Heart left ventricle (tissue), 16 donors: ENCODE measurements at regions of chr13 and their contacts with region 1.

Region 1: DNA sequence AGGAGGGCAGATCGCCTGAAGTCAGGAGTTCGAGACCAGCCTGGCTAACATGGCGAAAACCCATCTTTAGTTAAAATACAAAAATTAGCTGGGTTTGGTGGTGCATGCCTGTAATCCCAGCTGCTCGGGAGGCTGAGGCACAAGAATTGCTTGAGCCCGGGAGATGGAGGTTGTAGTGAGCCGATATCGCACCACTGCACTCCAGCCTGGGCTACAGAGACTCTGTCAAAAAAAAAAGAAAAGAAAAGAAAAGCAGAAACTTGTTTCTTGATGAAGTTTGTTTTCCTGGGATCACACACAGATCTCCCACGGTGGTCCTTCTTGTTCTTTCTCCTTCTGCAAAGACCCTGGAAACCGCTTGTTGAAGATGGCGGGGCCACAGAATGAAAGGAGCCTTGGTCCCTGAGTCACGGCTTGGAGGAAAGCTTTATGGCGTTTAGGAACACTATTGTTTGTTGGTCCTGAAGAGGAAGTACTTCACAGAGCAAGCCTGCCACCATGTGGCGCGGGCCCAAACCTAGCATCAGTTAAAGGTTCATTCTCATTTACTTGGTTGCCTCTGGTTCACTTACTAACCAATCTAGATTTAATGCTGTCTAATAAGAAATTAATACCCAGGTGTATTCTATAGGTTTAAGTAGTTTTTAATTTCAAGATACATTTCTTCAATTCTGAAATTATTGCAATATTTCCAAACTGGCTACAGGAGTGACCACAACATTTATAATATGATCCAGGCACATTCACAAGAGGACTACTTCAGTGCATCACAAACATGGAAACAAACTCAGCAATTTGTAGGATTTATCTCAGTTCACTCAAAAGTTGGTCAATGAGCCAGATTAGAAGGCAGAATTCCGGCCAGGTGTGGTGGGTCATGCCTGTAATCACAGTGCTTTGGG is 21.3 kb upstream of the ARL11 start:
- DNase-seq: peak; percentile 83 to 90 (median 88)
- ATAC-seq: peak; percentile 94 to 98 (median 98)
- H3K4me3 ChIP-seq: peak overlapping the region in 11 of 12 donors; percentile 13 to 52 (median 36)
- H3K27ac ChIP-seq: peak overlapping the region in 2 of 12 donors; percentile 28 to 50
- H3K4me1 ChIP-seq: peaks cover 0 to 7% (median 0%) of the 10 kb centered on the region in 12 donors
- H3K27me3 ChIP-seq: no peaks in the 10 kb centered on the region
- CTCF ChIP-seq: peak; percentile 66 to 93 (median 84)
- POLR2A ChIP-seq: no peak

Region 2: GRCh38 chr13:49300739-49301589 is 306.0 kb before region 1 on chr13:
- intact Hi-C with region 1: loop called (anchors 1 to 5 kb)
- DNase-seq: peak; percentile 40 to 65 (median 57)
- ATAC-seq: peak; percentile 54 to 77 (median 72)
- H3K4me3 ChIP-seq: peak overlapping the region in 9 of 12 donors; percentile 27 to 44 (median 33)
- H3K27ac ChIP-seq: peak overlapping the region in 3 of 12 donors; percentile 15 to 60 (median 24)
- H3K4me1 ChIP-seq: peaks cover 0 to 28% (median 13%) of the 10 kb centered on the region in 12 donors
- H3K27me3 ChIP-seq: no peaks in the 10 kb centered on the region
- CTCF ChIP-seq: peak; percentile 75 to 91 (median 86)
- POLR2A ChIP-seq: no peak

Region 3: GRCh38 chr13:49308089-49308875 is 298.7 kb before region 1 on chr13:
- intact Hi-C with region 1: loop called in 5 of 10 experiments (anchors 2 to 5 kb)
- DNase-seq: peak; percentile 74 to 91 (median 81)
- ATAC-seq: peak; percentile 91 to 93 (median 92)
- H3K4me3 ChIP-seq: no peak overlapping the region
- H3K27ac ChIP-seq: peak overlapping the region; percentile 45 to 92 (median 76)
- H3K4me1 ChIP-seq: peaks cover 3 to 33% (median 24%) of the 10 kb centered on the region in 12 donors
- H3K27me3 ChIP-seq: no peaks in the 10 kb centered on the region
- CTCF ChIP-seq: no peak
- POLR2A ChIP-seq: no peak

Region 4: DNA sequence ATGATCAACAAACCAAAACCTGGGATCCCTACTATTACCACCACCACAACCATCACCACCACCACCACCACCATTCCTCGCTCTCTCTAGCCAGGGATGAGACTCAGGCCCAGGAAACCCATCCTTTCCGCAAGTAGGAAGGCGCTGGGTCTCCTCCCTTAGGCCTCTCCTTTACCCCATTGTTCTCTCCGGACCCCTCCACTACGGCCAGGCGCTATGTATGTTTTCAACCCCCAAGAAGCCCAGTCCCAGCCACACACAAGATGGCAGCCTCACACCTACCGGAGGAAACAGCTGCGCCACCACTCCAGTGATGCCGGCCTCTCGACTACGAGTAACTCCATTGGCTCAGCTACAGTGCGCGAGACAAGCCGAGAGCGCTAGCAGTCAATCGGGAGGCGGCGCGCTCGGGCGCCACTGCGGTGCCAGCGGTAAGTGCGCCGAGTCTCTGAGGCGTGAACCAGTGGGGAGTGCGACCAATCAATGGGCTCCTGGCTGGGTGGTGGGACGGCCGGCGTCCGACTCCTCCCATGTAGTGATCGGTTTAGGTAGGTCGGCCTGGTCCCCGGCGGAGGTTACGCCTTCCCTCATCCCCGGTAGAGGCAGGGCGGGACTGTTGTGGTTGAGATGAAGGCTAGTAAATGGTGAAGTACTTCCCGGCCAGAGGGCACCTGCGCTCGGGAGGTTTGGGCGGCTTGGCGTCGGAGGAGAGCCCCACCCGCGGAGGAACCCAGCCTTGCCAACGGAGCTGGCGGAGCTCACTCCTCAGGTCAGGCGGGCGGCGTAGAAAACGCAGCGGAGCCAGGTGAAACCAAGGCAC is 163.1 kb before region 1 on chr13 and contains the starts of genes CAB39L and SETDB2:
- intact Hi-C with region 1: loop called in 4 of 10 experiments (anchors 5 to 10 kb)
- DNase-seq: peak; percentile 99 to 100 (median 99)
- ATAC-seq: peak; percentile 98 to 99 (median 99)
- H3K4me3 ChIP-seq: peak within 1 kb of the TSS; percentile 40 to 88 (median 82)
- H3K27ac ChIP-seq: peak within 1 kb of the TSS; percentile 81 to 99 (median 92)
- H3K4me1 ChIP-seq: peaks cover 0 to 47% (median 16%) of the 10 kb centered on the region in 12 donors
- H3K27me3 ChIP-seq: no peaks in the 10 kb centered on the region
- CTCF ChIP-seq: peak in 11 of 12 donors; percentile 10 to 70 (median 37)
- POLR2A ChIP-seq: peak in 1 of 2 donors; percentile 83
- total RNA-seq, gene CAB39L: 10.2 to 27.4 (median 19.0) TPM
- total RNA-seq, gene SETDB2: 7.9 to 19.8 (median 13.5) TPM

Region 5: GRCh38 chr13:49454388-49455006 is 152.5 kb before region 1 on chr13:
- intact Hi-C with region 1: loop called in 3 of 10 experiments (anchors 10 kb)
- DNase-seq: no peak
- ATAC-seq: no peak
- H3K4me3 ChIP-seq: no peak overlapping the region
- H3K27ac ChIP-seq: peak overlapping the region in 2 of 12 donors; percentile 5 to 43
- H3K4me1 ChIP-seq: peaks cover 0 to 16% (median 3%) of the 10 kb centered on the region in 12 donors
- H3K27me3 ChIP-seq: no peaks in the 10 kb centered on the region
- CTCF ChIP-seq: no peak
- POLR2A ChIP-seq: no peak

Region 6: DNA sequence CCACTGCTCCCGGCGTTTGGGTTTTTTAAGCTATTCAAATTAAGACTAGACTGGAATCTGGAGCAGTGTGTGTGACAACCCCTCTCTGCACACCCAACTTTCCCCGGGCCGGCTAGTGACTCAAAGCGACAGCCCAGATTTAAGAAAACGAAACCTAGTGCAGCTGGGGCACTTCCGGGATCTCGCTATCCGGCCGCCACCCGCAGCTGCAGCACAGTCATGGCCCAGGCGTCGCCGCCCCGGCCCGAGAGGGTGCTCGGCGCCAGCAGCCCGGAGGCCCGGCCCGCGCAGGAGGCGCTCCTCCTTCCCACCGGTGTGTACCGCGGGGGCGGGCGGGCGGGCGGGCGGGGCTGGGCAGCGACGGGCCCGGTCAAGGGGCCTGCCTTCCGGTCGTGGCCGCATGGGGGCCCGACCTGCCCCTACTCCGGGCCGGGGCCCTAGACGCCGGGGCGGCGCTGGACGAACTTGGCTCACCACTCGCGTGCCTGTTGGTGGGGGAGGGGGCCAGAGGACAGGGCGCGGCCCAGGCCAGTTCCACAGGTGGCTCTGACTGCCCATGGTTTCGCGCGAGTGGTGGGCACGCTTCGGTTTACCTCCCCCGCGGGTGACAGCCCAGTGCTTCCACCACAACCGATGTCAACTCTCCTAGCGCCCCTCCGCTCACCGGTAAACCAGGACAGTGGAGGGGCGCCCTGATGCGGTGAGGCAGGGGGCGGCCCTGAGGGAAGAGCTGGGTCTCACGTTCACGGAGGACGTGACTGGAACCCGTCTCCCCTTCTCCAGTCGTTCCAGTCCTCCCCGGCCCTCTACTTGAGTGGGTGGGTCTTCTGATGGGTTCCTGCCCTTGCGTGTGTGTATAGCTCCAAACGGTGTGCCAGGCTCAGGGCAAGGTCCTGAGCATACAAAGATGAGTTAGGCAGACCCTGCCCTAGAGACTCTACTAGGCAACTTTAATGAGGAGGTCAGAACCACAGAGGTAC is 110.9 kb before region 1 on chr13 and contains the start of gene PHF11:
- intact Hi-C with region 1: loop called in 2 of 10 experiments (anchors 5 kb)
- DNase-seq: peak; percentile 82 to 91 (median 88)
- ATAC-seq: peak; percentile 71 to 92 (median 90)
- H3K4me3 ChIP-seq: peak within 1 kb of the TSS; percentile 56 to 86 (median 70)
- H3K27ac ChIP-seq: peak within 1 kb of the TSS; percentile 83 to 99 (median 95)
- H3K4me1 ChIP-seq: peaks cover 0 to 39% (median 8%) of the 10 kb centered on the region in 12 donors
- H3K27me3 ChIP-seq: no peaks in the 10 kb centered on the region
- CTCF ChIP-seq: peak in 9 of 12 donors; percentile 10 to 37 (median 23)
- POLR2A ChIP-seq: peak in 1 of 2 donors; percentile 43
- total RNA-seq, gene PHF11: 13.7 to 48.5 (median 16.5) TPM